HCT116 (cell line): ENCODE measurements at regions of chr10 and their contacts with region 1.

Region 1: GRCh38 chr10:117167789-117168674 is 29.3 kb upstream of the KCNK18 start:
- DNase-seq: no peak
- ATAC-seq: peak; percentile 91
- H3K4me3 ChIP-seq: peak overlapping the region in 1 of 2 experiments; percentile 34; a peak in 2 of 4 replicates
- H3K27ac ChIP-seq: no peak overlapping the region
- H3K4me1 ChIP-seq: peaks cover 2 to 24% of the 10 kb centered on the region in 2 experiments; a peak in 3 of 4 replicates
- H3K27me3 ChIP-seq: peaks cover 13% of the 10 kb centered on the region; the same call in 1 of the 2 replicates
- CTCF ChIP-seq: peak; percentile 78 to 97 (median 96)
- POLR2A ChIP-seq: peak; percentile 22
- RAD21 ChIP-seq: peak; percentile 75

Region 2: DNA sequence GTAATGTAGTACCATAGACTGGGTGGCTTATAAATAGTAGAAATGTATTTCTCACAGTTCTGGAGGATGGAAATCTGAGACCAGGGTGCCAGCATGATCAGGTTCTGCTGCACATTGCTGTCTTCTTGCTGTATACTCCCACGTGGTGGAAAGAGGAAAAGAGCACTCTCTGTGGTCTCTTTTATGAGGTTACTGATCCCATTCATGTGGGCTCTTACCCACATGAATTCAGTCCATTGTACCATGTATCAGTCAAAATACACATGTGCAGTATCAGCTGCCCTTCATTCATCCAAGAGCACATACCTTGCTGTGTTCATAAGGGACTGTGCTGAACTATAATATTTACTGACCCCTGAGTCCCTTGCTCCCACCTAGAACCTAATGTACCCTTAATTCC is 530.2 kb before region 1 on chr10:
- CTCF ChIA-PET with region 1: interaction called, 3 read pairs
- POLR2A ChIA-PET with region 1: no interaction called
- RAD21 ChIA-PET with region 1: no interaction called
- intact Hi-C with region 1: loop called (anchors 5 kb)
- DNase-seq: no peak
- ATAC-seq: no peak
- H3K4me3 ChIP-seq: no peak overlapping the region
- H3K27ac ChIP-seq: no peak overlapping the region
- H3K4me1 ChIP-seq: peaks cover 11 to 20% of the 10 kb centered on the region in 2 experiments
- H3K27me3 ChIP-seq: no peaks in the 10 kb centered on the region
- CTCF ChIP-seq: no peak
- POLR2A ChIP-seq: no peak
- RAD21 ChIP-seq: no peak

Region 3: DNA sequence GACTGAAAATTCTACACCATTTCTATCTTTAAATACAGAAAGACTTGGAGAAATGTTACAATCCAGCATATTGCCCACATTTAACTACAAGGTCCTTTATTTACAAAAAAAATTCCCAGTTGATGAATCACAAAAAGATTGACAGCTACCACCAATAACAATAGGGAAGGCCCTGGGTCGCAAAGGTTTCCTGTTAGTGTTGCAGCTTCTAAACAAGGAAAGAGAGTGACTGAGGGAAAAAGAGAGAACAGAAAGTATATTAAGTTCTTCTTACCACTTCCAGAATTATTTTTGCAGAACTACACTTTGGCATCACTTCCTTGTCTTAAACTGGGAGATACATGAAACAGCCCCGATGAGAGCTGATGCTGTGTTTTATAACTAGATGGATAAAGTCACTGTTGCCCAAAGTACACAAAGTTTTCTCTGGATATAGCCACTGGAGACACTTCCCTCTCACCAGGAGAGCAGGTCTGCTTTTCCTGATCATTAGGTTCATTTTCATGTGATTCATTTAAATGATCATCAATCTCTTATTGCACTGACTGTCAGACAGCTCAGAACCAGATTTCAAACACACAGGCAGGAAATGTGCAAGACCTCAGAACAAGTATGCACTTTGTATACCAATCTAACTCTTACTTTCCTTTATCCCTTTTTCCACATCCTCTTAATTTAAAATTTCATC is 220.0 kb before region 1 on chr10:
- CTCF ChIA-PET with region 1: interaction called, 3 read pairs
- POLR2A ChIA-PET with region 1: no interaction called
- RAD21 ChIA-PET with region 1: no interaction called
- intact Hi-C with region 1: loop called (anchors 2 kb)
- DNase-seq: peak; percentile 59
- ATAC-seq: peak; percentile 64
- H3K4me3 ChIP-seq: peak overlapping the region in 1 of 2 experiments; percentile 17; a peak in 1 of 4 replicates
- H3K27ac ChIP-seq: peak overlapping the region; percentile 43
- H3K4me1 ChIP-seq: peaks cover 22 to 23% of the 10 kb centered on the region in 2 experiments
- H3K27me3 ChIP-seq: no peaks in the 10 kb centered on the region
- CTCF ChIP-seq: no peak
- POLR2A ChIP-seq: no peak
- RAD21 ChIP-seq: no peak

Region 4: GRCh38 chr10:117074621-117075020 is 93.4 kb before region 1 on chr10:
- CTCF ChIA-PET with region 1: interaction called, 4 read pairs
- POLR2A ChIA-PET with region 1: no interaction called
- RAD21 ChIA-PET with region 1: no interaction called
- intact Hi-C with region 1: loop called (anchors 5 kb)
- DNase-seq: peak; percentile 52
- ATAC-seq: peak; percentile 81
- H3K4me3 ChIP-seq: no peak overlapping the region
- H3K27ac ChIP-seq: no peak overlapping the region
- H3K4me1 ChIP-seq: peaks cover 15 to 33% of the 10 kb centered on the region in 2 experiments
- H3K27me3 ChIP-seq: no peaks in the 10 kb centered on the region
- CTCF ChIP-seq: peak; percentile 58 to 88 (median 72)
- POLR2A ChIP-seq: no peak
- RAD21 ChIP-seq: peak; percentile 95

Region 5: GRCh38 chr10:117186832-117187615 is 19.0 kb after region 1 on chr10:
- CTCF ChIA-PET with region 1: interaction called, 15 read pairs
- POLR2A ChIA-PET with region 1: no interaction called
- RAD21 ChIA-PET with region 1: no interaction called
- intact Hi-C with region 1: no loop called
- DNase-seq: peak; percentile 80
- ATAC-seq: peak; percentile 75
- H3K4me3 ChIP-seq: no peak overlapping the region; a peak in 1 of 4 replicates
- H3K27ac ChIP-seq: peak overlapping the region; percentile 0; the same call in 1 of the 2 replicates
- H3K4me1 ChIP-seq: peaks cover 14 to 34% of the 10 kb centered on the region in 2 experiments
- H3K27me3 ChIP-seq: no peaks in the 10 kb centered on the region
- CTCF ChIP-seq: no peak
- POLR2A ChIP-seq: no peak
- RAD21 ChIP-seq: no peak